ENCODE measurements at regions of chr10 and their contacts with region 1.

Region 1: DNA sequence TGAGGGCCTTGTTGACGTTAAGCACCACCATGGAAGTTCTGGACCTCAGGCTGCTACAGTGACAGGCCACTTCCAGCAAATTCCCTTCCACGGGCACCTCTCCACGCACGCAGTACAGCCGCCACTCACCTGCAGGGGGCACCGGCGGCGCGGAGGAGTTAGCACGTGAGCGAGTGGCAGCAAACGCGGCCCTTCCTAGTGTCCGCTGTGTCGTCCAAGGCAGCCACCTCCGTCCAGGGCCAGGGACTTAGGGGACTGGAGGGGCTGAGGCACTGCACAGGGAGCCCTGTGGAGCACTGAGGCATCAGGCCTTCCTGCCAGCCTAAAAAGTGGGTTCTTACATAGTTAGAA is 164.4 kb downstream of the SVIL start:
- DNase-seq: peak; percentile 25 to 91
- H3K4me3 ChIP-seq: no peak overlapping the region
- H3K27ac ChIP-seq: no peak overlapping the region
- H3K4me1 ChIP-seq: no peaks in the 10 kb centered on the region; a peak in 2 of 7 replicates
- H3K27me3 ChIP-seq: no peaks in the 10 kb centered on the region
- CTCF ChIP-seq: peak; percentile 81 to 95 (median 89)
- EP300 ChIP-seq: no peak
- POLR2A ChIP-seq: no peak
- RAD21 ChIP-seq: peak; percentile 69 to 80

Region 2: GRCh38 chr10:29285624-29286051 is 184.7 kb before region 1 on chr10:
- CTCF ChIA-PET with region 1: no interaction called
- POLR2A ChIA-PET with region 1: no interaction called
- DNase-seq: no peak
- H3K4me3 ChIP-seq: no peak overlapping the region
- H3K27ac ChIP-seq: no peak overlapping the region
- H3K4me1 ChIP-seq: no peaks in the 10 kb centered on the region
- H3K27me3 ChIP-seq: no peaks in the 10 kb centered on the region
- CTCF ChIP-seq: no peak
- EP300 ChIP-seq: no peak
- POLR2A ChIP-seq: no peak
- RAD21 ChIP-seq: no peak

Region 3: GRCh38 chr10:29452546-29452945 is 17.8 kb before region 1 on chr10:
- CTCF ChIA-PET with region 1: interaction called, 13 read pairs
- POLR2A ChIA-PET with region 1: no interaction called
- DNase-seq: no peak
- H3K4me3 ChIP-seq: no peak overlapping the region
- H3K27ac ChIP-seq: no peak overlapping the region
- H3K4me1 ChIP-seq: no peaks in the 10 kb centered on the region; a peak in 1 of 7 replicates
- H3K27me3 ChIP-seq: no peaks in the 10 kb centered on the region
- CTCF ChIP-seq: no peak
- EP300 ChIP-seq: no peak
- POLR2A ChIP-seq: no peak
- RAD21 ChIP-seq: no peak

Region 4: DNA sequence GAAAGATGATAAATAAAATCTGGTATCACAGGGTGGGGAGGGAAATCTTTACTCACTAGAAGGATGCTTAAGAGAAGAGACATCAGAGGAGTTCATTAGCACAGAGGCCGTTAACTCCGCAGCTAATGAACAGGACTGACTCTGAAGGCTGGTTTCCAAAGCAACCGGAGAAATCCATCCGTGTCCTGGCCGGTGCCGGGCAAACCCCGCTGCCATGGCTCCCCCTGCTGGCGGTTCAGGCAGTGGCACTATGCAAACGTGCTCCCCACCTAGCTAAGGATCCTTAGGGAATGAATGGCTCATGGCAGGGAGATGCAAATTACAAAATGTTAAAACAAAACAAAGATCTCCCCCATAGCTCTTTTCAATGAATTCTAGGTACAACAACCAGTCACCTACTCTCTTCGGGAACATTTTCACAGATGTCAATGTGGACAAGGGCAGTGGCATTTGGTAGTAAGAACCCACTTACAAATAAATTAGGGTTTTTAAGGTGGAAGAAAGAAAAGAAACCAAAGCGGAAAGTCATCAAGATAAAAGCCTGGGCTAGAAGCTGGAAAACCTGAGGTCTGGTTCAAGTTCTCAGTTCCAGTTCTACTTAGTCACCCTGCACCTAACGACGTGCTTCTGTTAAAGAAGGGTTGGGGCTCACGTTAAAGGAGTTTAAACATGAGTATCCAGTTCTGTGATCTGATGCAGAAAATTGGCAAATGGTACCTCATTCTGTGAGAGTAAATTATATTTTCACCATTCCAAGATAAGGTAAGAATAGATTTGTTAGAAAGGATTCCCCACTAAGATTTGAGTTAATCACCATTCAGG is 26.2 kb after region 1 on chr10:
- CTCF ChIA-PET with region 1: interaction called, 21 read pairs
- POLR2A ChIA-PET with region 1: interaction called, 5 read pairs
- DNase-seq: peak; percentile 50 to 97
- H3K4me3 ChIP-seq: peak overlapping the region in 1 of 4 experiments; percentile 28; a peak in 1 of 8 replicates
- H3K27ac ChIP-seq: no peak overlapping the region
- H3K4me1 ChIP-seq: peaks cover 0 to 3% (median 0%) of the 10 kb centered on the region in 4 experiments; a peak in 2 of 7 replicates
- H3K27me3 ChIP-seq: no peaks in the 10 kb centered on the region
- CTCF ChIP-seq: peak; percentile 89 to 97 (median 90)
- EP300 ChIP-seq: no peak
- POLR2A ChIP-seq: no peak
- RAD21 ChIP-seq: peak; percentile 79 to 80

Region 5: GRCh38 chr10:29555746-29556481 is 85.6 kb after region 1 on chr10:
- CTCF ChIA-PET with region 1: no interaction called
- POLR2A ChIA-PET with region 1: no interaction called
- DNase-seq: no peak
- H3K4me3 ChIP-seq: no peak overlapping the region
- H3K27ac ChIP-seq: no peak overlapping the region
- H3K4me1 ChIP-seq: peaks cover 0 to 8% (median 5%) of the 10 kb centered on the region in 4 experiments; a peak in 3 of 7 replicates
- H3K27me3 ChIP-seq: no peaks in the 10 kb centered on the region
- CTCF ChIP-seq: no peak
- EP300 ChIP-seq: no peak
- POLR2A ChIP-seq: no peak
- RAD21 ChIP-seq: no peak